T-cell (primary cell): ENCODE measurements at regions of chr6 and their contacts with region 1.

Region 1: DNA sequence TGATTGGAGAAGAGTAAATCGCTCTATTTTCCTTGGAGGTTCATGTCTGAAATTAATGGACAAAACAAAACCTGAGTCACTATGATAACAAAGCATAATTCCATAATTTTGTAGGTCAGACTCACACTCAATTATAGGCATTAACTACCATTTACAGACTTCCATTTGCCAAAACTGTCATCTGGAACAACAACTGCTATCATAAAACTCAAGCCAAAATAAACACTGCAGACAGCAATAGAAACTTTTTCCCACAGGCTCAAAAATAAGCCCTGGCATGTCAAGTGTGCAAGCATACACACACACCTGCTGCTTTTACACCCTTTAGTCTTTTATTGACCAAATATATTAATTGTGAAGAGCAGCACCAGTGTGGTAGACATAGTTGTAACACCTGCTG is 7.1 kb downstream of the MRPS10 start:
- DNase-seq: no peak
- ATAC-seq: no peak
- H3K4me3 ChIP-seq: no peak overlapping the region
- H3K4me3 Mint-ChIP-seq: no peak overlapping the region
- H3K27ac ChIP-seq: no peak overlapping the region
- H3K27ac Mint-ChIP-seq: no peak overlapping the region
- H3K4me1 ChIP-seq: peaks cover 2 to 8% of the 10 kb centered on the region in 2 experiments
- H3K4me1 Mint-ChIP-seq: peaks cover 7 to 13% (median 11%) of the 10 kb centered on the region in 3 donors
- H3K27me3 ChIP-seq: no peaks in the 10 kb centered on the region
- H3K27me3 Mint-ChIP-seq: no peaks in the 10 kb centered on the region

Region 2: GRCh38 chr6:42366011-42366705 is 155.6 kb after region 1 on chr6:
- CTCF ChIA-PET with region 1: interaction called in 1 of 2 experiments, 10 read pairs
- POLR2A ChIA-PET with region 1: no interaction called
- DNase-seq: peak in 3 of 35 experiments; percentile 25 to 38 (median 27)
- ATAC-seq: peak in 3 of 4 experiments; percentile 21 to 60 (median 28)
- H3K4me3 ChIP-seq: no peak overlapping the region
- H3K4me3 Mint-ChIP-seq: peak overlapping the region; percentile 35 to 74 (median 60)
- H3K27ac ChIP-seq: peak overlapping the region; percentile 85
- H3K27ac Mint-ChIP-seq: peak overlapping the region; percentile 96 to 99
- H3K4me1 ChIP-seq: peaks cover 37 to 69% of the 10 kb centered on the region in 2 experiments
- H3K4me1 Mint-ChIP-seq: peaks cover 65 to 82% (median 78%) of the 10 kb centered on the region in 3 donors
- H3K27me3 ChIP-seq: no peaks in the 10 kb centered on the region
- H3K27me3 Mint-ChIP-seq: no peaks in the 10 kb centered on the region